ENCODE measurements at regions of chr3 and their contacts with region 1.

Region 1: GRCh38 chr3:197926418-197926817 is 23.6 kb upstream of the RPL35A start:
- DNase-seq: no peak
- H3K4me3 ChIP-seq: no peak overlapping the region
- H3K27ac ChIP-seq: no peak overlapping the region
- H3K27me3 ChIP-seq: no peaks in the 10 kb centered on the region
- CTCF ChIP-seq: peak; percentile 25

Region 2: GRCh38 chr3:197912770-197913476 is 13.5 kb before region 1 on chr3:
- CTCF ChIA-PET with region 1: no interaction called
- POLR2A ChIA-PET with region 1: no interaction called
- DNase-seq: no peak
- H3K4me3 ChIP-seq: no peak overlapping the region
- H3K27ac ChIP-seq: no peak overlapping the region
- H3K27me3 ChIP-seq: no peaks in the 10 kb centered on the region
- CTCF ChIP-seq: no peak

Region 3: GRCh38 chr3:197942956-197943556 is 16.6 kb after region 1 on chr3:
- CTCF ChIA-PET with region 1: interaction called, 14 read pairs
- POLR2A ChIA-PET with region 1: no interaction called
- DNase-seq: no peak
- H3K4me3 ChIP-seq: no peak overlapping the region
- H3K27ac ChIP-seq: no peak overlapping the region
- H3K27me3 ChIP-seq: no peaks in the 10 kb centered on the region
- CTCF ChIP-seq: peak; percentile 91

Region 4: GRCh38 chr3:198093112-198093679 is 166.8 kb after region 1 on chr3:
- CTCF ChIA-PET with region 1: no interaction called
- POLR2A ChIA-PET with region 1: no interaction called
- DNase-seq: no peak
- H3K4me3 ChIP-seq: no peak overlapping the region
- H3K27ac ChIP-seq: no peak overlapping the region
- H3K27me3 ChIP-seq: peaks cover 17% of the 10 kb centered on the region
- CTCF ChIP-seq: no peak

Measured in AG04450 (cell line).